PC-9 (cell line): ENCODE measurements at regions of chr7 and their contacts with region 1.

Region 1: GRCh38 chr7:120241973-120242372 is 31.0 kb upstream of the KCND2 start:
- DNase-seq: no peak
- H3K4me3 ChIP-seq: no peak overlapping the region
- H3K27ac ChIP-seq: no peak overlapping the region
- H3K4me1 ChIP-seq: no peaks in the 10 kb centered on the region
- H3K27me3 ChIP-seq: no peaks in the 10 kb centered on the region
- CTCF ChIP-seq: no peak

Region 2: DNA sequence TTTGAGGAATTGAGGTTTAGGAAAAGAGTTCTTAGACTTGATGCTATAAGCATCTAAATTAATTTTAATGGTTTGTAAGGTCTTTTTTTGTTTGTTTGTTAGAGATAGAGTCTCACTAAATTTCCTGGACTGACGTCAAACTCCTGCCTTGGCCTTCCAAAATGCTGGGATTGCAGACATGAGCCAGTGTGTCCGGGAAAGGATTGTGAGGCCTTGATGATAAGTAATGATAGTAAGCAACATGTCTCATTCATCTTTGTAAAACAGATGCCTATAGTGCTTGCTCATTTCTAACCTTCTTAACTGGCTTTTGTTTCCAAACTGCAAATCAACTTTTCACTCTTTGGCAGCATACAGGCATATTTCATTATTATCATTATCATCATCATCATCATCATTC is 145.0 kb before region 1 on chr7:
- CTCF ChIA-PET with region 1: no interaction called
- POLR2A ChIA-PET with region 1: interaction called, 16 read pairs
- intact Hi-C with region 1: no loop called
- DNase-seq: no peak
- H3K4me3 ChIP-seq: no peak overlapping the region
- H3K27ac ChIP-seq: no peak overlapping the region
- H3K4me1 ChIP-seq: no peaks in the 10 kb centered on the region
- H3K27me3 ChIP-seq: no peaks in the 10 kb centered on the region
- CTCF ChIP-seq: no peak

Region 3: GRCh38 chr7:120168066-120168465 is 73.9 kb before region 1 on chr7:
- CTCF ChIA-PET with region 1: no interaction called
- POLR2A ChIA-PET with region 1: no interaction called
- intact Hi-C with region 1: no loop called
- DNase-seq: no peak
- H3K4me3 ChIP-seq: no peak overlapping the region
- H3K27ac ChIP-seq: no peak overlapping the region
- H3K4me1 ChIP-seq: peaks cover 26% of the 10 kb centered on the region
- H3K27me3 ChIP-seq: no peaks in the 10 kb centered on the region
- CTCF ChIP-seq: no peak

Region 4: GRCh38 chr7:120207037-120207436 is 34.9 kb before region 1 on chr7:
- CTCF ChIA-PET with region 1: no interaction called
- POLR2A ChIA-PET with region 1: no interaction called
- intact Hi-C with region 1: no loop called
- DNase-seq: no peak
- H3K4me3 ChIP-seq: no peak overlapping the region
- H3K27ac ChIP-seq: no peak overlapping the region
- H3K4me1 ChIP-seq: no peaks in the 10 kb centered on the region
- H3K27me3 ChIP-seq: no peaks in the 10 kb centered on the region
- CTCF ChIP-seq: no peak